Right cardiac atrium (tissue), 5 donors: ENCODE measurements at regions of chr11 and their contacts with region 1.

Region 1: GRCh38 chr11:113305440-113306336 is 8.7 kb upstream of the TTC12 start:
- DNase-seq: peak; percentile 80 to 94 (median 89)
- ATAC-seq: peak; percentile 89
- H3K4me3 ChIP-seq: no peak overlapping the region
- H3K27ac ChIP-seq: no peak overlapping the region
- H3K4me1 ChIP-seq: no peaks in the 10 kb centered on the region
- H3K27me3 ChIP-seq: no peaks in the 10 kb centered on the region

Region 2: DNA sequence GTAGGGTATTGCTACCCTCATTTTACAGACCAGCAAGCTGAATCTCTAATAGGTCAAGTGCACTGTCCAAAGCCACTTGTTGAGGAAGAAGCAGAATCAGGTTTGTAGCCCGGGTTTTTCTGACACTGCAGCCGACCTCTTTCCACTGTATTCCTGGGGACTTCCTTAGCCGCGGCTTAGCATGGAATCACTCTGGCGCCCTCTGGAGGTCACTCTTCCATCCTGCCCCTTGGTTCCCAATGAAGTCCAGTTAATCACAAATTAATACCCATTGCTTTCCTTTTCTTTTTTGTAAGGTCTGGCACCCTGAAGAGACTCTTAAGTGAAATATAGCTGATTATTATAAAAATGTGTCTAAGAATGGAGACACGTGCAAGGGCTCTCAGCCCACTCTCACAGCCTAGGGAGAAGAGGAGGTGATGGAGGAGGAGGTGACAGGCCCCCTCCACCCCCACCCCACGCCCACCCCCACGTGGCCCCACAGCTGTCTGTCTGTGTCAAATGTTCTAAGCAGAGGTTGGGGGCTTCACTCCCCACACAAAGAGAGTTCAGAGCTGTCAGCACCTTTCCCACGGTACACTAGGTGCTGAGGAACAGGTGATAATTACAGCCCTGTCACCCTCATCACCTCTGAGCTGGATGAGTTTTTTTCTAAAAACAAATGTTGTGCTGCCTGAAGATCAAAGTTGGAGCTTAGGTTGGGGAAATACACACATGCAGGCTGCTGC is 227.2 kb after region 1 on chr11:
- intact Hi-C with region 1: loop called (anchors 2 to 5 kb)
- DNase-seq: peak; percentile 76 to 92 (median 83)
- ATAC-seq: peak; percentile 82 to 83
- H3K4me3 ChIP-seq: no peak overlapping the region
- H3K27ac ChIP-seq: no peak overlapping the region
- H3K4me1 ChIP-seq: no peaks in the 10 kb centered on the region
- H3K27me3 ChIP-seq: no peaks in the 10 kb centered on the region